WTC11 (cell line): ENCODE measurements at regions of chr17 and their contacts with region 1.

Region 1: DNA sequence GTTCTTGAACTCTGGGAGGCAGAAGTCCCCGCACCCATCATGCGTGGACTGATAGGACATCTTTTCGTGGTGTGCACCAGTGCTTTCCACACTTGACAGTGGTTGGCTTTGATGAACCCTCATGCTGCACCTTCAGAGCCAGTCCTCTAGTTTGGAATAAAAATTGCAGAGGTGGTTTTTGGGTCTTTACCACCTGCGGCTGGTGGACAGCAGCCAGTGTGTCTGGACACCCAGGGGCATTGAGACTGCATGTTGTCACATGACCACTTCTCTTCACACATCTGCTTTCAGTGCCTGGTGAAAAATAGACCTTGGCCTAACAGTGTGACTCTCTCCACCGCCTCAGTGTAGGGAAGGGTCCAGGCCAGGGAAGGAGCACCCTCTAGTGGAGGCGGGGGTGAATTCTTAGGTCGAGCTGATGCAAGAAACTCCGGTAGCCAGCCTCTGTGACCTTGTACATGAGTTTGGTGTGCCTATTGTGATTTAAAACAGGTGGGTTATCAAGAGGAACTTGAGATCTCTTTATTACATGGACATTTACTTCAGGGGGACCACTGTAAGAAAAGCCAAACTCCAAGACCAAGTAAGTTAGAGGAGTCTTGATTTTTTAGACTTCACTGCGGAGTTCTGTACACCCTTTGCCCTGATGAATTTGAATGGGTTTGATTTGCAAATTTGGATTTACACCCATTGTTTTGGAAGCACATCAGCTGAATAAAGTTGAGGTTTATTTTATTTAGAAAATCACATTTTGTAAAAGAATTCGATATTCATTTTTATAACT is 17.9 kb downstream of the GOSR2 start:
- DNase-seq: peak; percentile 88
- ATAC-seq: peak; percentile 80
- H3K4me3 Mint-ChIP-seq: no peak overlapping the region
- H3K27ac Mint-ChIP-seq: peak overlapping the region; percentile 80; the same call in 1 of the 2 replicates
- H3K4me1 Mint-ChIP-seq: peaks cover 37% of the 10 kb centered on the region
- H3K27me3 Mint-ChIP-seq: no peaks in the 10 kb centered on the region
- CTCF ChIP-seq: peak; percentile 64

Region 2: DNA sequence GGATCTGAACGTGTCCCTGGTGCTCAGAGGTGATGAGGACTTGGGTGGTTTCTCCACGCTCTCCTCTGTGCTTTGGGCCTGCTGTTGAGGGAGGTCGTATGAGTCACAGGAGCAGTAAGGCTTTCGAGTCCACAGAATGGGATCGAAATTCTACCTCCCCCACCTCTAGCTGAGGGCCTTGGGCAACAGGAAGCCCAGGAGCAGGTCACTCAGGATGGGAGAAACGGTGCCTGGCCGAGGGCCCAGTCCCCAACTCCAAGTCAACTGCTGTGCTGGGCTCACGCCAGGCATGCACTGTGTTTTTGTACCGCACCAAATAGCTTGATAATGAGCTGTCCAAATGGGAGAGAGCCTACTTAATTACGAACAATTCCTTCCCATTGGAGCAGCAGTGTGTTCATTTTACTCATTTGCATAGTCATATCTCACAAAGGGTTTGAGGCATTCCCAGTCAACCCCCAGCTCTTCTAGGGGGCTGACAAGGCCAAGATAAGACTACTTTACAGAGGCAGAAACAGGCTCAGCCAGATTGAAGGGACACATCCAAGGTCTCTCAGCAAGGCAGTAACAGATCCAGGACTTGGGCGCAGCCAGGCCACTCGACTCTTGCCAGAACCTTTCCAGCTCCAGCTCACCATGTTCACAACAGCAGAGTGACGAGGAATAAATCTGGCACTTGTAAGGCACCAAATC is 176.0 kb before region 1 on chr17:
- CTCF ChIA-PET with region 1: no interaction called
- POLR2A ChIA-PET with region 1: no interaction called
- DNase-seq: no peak
- ATAC-seq: no peak
- H3K4me3 Mint-ChIP-seq: no peak overlapping the region
- H3K27ac Mint-ChIP-seq: no peak overlapping the region
- H3K4me1 Mint-ChIP-seq: peaks cover 25% of the 10 kb centered on the region
- H3K27me3 Mint-ChIP-seq: peaks cover 30% of the 10 kb centered on the region
- CTCF ChIP-seq: no peak

Region 3: GRCh38 chr17:46803559-46803958 is 137.3 kb before region 1 on chr17:
- CTCF ChIA-PET with region 1: no interaction called
- POLR2A ChIA-PET with region 1: no interaction called
- DNase-seq: no peak
- ATAC-seq: no peak; the same call in 1 of the 2 replicates
- H3K4me3 Mint-ChIP-seq: no peak overlapping the region
- H3K27ac Mint-ChIP-seq: no peak overlapping the region
- H3K4me1 Mint-ChIP-seq: peaks cover 7% of the 10 kb centered on the region
- H3K27me3 Mint-ChIP-seq: no peaks in the 10 kb centered on the region
- CTCF ChIP-seq: no peak

Region 4: DNA sequence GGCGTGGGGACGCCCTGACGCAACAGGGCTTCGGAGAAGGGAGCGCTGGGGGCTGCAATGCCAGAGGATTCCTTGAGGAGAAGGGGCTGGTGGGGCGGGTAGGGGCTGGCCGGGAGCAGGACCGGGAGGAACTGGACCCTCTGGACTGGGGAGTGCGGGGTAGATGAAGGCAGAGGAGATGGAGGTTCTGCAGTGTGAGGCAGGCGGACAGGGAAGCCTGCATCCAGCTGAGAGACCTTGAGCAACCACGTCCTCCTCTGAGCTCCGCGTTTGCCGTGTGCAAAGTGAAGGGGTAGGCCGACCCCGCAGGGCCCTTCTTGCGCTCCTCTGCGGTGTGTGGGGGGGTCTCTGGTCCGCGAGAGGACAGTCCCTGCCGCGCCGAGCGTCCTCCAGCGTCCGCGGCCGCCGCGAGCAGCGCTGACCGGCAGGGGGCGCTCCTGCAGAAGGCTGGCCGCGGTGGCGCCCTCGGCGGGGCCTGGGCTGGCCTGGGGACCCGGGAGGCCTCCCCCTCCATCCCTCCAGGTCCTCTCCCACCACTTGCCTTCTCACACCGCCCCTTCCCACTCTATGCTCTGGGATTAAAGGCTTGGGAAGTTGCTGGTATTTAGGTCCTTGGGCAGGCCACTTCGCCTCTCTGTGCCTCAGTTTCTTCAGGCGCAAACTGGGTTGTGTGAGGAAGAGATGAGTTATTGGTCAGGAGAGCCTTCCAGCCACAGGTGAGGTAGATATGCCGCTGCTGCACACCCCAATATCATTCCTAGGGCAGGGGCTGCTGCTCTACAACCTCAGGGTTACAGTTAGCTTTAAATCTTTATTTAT is 99.0 kb before region 1 on chr17:
- CTCF ChIA-PET with region 1: interaction called, 24 read pairs
- POLR2A ChIA-PET with region 1: no interaction called
- DNase-seq: peak; percentile 78
- ATAC-seq: peak; percentile 92
- H3K4me3 Mint-ChIP-seq: peak overlapping the region; percentile 56
- H3K27ac Mint-ChIP-seq: no peak overlapping the region
- H3K4me1 Mint-ChIP-seq: peaks cover 3% of the 10 kb centered on the region; the same call in 1 of the 2 replicates
- H3K27me3 Mint-ChIP-seq: peaks cover 44% of the 10 kb centered on the region
- CTCF ChIP-seq: peak; percentile 96

Region 5: DNA sequence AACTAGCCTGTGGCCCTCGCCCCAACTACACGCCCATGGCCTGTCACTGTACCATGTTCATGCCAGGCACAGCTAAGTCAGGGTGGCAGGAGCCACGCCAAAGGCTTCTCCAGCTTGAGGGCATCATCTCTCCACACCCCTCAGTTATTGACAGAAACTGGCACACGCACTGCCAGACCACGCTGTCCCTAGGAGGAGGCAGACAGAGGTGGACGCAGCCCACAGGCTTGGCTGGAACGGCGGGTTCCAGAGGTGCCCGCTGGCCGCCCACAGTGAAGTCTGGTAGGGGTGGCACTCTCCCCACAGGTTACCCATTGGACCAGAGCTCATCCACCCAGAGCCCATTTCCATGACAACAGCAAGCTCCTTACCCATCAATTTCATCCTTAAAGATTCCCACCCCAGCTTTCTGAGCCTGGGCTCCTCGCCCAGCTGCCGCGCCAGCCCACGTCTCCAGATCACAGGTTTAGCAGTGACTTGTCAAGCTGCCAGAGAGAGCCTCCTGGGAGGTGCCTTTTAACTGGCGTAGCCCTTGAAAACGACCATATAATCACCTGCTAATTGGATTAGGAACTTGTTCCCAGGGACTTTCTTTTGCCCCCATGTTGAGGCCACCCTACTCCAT is 10.3 kb after region 1 on chr17:
- CTCF ChIA-PET with region 1: interaction called, 12 read pairs
- POLR2A ChIA-PET with region 1: no interaction called
- DNase-seq: no peak
- ATAC-seq: no peak
- H3K4me3 Mint-ChIP-seq: no peak overlapping the region
- H3K27ac Mint-ChIP-seq: no peak overlapping the region
- H3K4me1 Mint-ChIP-seq: no peaks in the 10 kb centered on the region
- H3K27me3 Mint-ChIP-seq: peaks cover 9% of the 10 kb centered on the region; the same call in 1 of the 2 replicates
- CTCF ChIP-seq: no peak

Region 6: DNA sequence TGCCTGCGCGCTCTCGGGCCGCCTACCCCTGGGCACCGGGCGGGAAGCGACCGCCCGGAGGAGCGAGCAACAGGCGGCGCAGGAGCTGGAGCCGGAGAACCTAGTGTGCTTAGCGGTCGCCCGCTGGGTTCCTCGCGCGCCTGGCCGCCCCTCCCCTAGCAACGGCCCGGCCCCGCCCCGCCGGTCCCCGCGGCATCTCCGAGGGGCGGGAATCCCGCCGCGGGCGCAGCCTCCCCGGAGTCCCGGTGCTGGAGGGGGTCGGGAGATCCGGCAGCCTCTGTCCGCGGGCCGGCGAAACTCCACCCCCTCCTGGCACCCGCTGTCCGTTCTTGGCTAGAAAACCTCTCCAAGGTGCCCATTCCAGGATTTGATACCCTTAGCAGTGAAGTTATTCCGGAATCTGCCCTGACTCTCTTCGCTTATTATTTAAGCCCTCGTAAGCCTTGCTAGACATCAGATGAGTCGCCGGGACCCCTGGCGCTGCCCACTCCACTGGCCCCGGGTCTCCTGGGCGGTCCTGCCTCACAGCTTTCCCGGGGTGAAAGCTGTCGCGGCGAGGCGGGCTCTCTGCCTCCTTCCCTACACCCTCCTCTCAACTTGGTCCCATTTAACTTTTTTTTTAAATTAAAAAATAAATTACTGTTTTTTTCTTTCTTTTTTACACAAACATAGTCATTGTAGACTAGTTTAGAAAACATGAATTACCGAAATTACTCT is 38.5 kb after region 1 on chr17 and contains the start of gene RPRML:
- CTCF ChIA-PET with region 1: interaction called, 118 read pairs
- POLR2A ChIA-PET with region 1: no interaction called
- DNase-seq: peak; percentile 59
- ATAC-seq: peak; percentile 2; the same call in 1 of the 2 replicates
- H3K4me3 Mint-ChIP-seq: peak within 1 kb of the TSS; percentile 92
- H3K27ac Mint-ChIP-seq: no peak within 1 kb of the TSS
- H3K4me1 Mint-ChIP-seq: peaks cover 44% of the 10 kb centered on the region
- H3K27me3 Mint-ChIP-seq: peaks cover 31% of the 10 kb centered on the region
- CTCF ChIP-seq: no peak
- total RNA-seq, gene RPRML: 3.1 to 4.9 TPM (median 4.7 TPM) in 3 replicates

Region 7: DNA sequence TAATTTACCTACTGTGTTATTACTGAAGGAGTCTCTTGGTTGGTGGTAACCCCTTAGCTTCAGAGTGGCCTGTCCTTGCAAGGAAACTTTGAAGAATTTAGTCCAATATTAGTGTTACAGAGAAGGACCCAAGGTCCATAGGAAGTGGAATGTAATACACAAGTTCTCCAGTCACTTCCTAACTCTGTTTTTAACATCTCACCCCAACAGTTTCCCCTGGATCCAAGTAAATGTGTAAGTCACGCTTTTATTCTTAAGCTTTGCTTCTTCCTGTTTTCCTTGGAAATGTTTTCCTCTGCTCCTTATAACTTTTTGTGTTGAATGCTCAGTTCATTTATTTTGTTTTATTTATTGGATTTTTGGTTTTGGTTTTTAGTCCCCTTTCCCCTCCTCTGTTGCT is 64.1 kb after region 1 on chr17:
- CTCF ChIA-PET with region 1: interaction called, 86 read pairs
- POLR2A ChIA-PET with region 1: no interaction called
- DNase-seq: no peak
- ATAC-seq: no peak
- H3K4me3 Mint-ChIP-seq: no peak overlapping the region
- H3K27ac Mint-ChIP-seq: no peak overlapping the region
- H3K4me1 Mint-ChIP-seq: no peaks in the 10 kb centered on the region
- H3K27me3 Mint-ChIP-seq: no peaks in the 10 kb centered on the region
- CTCF ChIP-seq: no peak

Region 8: DNA sequence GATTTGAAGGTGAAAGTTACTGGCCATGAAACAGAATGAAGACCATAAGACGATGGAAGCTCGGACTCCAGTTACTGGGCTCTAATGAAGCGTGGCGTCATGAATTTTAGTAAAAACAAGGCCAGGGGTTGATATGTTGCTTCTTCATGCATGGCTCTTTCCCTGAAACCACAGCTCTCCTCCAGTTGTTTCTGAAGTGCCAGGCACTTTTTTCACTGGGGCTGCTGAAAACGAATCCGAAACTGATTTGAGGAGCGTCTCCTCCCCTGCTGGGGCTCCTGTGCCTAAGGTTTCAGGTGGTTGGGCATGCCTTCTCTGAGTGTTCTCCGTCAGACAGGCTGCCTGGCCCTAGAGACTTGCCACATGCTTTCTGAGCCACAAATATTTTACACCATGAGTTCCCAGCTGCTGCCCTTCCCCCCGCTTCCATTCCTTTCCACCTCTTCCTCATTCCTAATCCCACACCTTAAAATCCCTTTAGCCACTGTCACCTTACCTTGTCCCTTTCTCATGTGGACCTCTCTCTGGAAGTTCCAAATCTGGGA is 264.7 kb after region 1 on chr17:
- CTCF ChIA-PET with region 1: no interaction called
- POLR2A ChIA-PET with region 1: no interaction called
- DNase-seq: peak; percentile 26
- ATAC-seq: peak; percentile 50; the same call in 1 of the 2 replicates
- H3K4me3 Mint-ChIP-seq: no peak overlapping the region
- H3K27ac Mint-ChIP-seq: 0 out of 2 replicates have a peak overlapping the region, but pooled peaks have one; percentile 9
- H3K4me1 Mint-ChIP-seq: peaks cover 21% of the 10 kb centered on the region
- H3K27me3 Mint-ChIP-seq: peaks cover 8% of the 10 kb centered on the region; the same call in 1 of the 2 replicates
- CTCF ChIP-seq: no peak

Region 9: GRCh38 chr17:47352848-47353247 is 412.0 kb after region 1 on chr17:
- CTCF ChIA-PET with region 1: interaction called, 10 read pairs
- POLR2A ChIA-PET with region 1: no interaction called
- DNase-seq: no peak
- ATAC-seq: no peak
- H3K4me3 Mint-ChIP-seq: no peak overlapping the region
- H3K27ac Mint-ChIP-seq: no peak overlapping the region
- H3K4me1 Mint-ChIP-seq: 0 out of 2 replicates have a peak, but pooled peaks cover 2% of the 10 kb centered on the region
- H3K27me3 Mint-ChIP-seq: no peaks in the 10 kb centered on the region; the same call in 1 of the 2 replicates
- CTCF ChIP-seq: no peak